ENCODE measurements at regions of chr2 and their contacts with region 1.

Region 1: DNA sequence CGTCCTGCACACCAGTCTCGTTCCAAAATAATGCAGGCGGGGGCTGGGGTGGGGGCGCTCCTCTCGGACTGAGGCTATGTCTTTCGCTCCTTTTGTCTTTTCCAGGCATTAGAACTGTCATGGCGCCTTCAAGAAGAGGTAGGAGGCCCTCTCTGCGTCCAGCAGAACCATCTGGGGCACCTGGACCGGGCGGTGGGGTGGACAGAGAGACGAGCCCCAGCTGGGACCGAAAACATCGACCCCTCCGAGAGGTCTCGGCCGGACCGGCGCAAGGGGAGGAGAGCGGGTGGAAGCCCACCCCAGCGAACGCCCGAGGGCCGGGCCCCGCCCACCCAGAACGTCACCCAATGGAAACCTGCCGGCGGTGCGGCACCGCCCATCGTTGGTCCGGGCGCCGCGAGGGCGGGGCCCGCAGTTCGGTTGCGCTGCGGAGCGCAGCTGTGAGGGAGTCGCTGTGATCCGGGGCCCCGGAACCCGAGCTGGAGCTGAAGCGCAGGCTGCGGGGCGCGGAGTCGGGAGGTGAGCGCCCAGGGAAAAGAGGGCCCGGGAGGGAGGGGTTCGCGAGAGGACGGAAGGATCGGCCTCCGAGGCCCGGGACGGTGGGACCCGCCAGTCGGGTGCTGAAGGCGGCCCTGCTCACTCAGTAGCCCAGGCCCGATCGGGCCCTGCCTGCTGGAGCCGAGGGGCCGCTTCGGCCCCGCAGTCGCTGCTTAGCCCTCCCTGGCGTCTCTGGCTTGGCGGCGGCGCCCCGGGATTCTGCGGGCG is at the start of gene NRBP1:
- DNase-seq: peak; percentile 93
- H3K4me3 Mint-ChIP-seq: peak within 1 kb of the TSS; percentile 98
- H3K27ac Mint-ChIP-seq: peak within 1 kb of the TSS; percentile 92
- H3K4me1 Mint-ChIP-seq: peaks cover 26% of the 10 kb centered on the region
- H3K27me3 Mint-ChIP-seq: no peaks in the 10 kb centered on the region
- total RNA-seq, gene NRBP1: 103 to 104 TPM

Region 2: DNA sequence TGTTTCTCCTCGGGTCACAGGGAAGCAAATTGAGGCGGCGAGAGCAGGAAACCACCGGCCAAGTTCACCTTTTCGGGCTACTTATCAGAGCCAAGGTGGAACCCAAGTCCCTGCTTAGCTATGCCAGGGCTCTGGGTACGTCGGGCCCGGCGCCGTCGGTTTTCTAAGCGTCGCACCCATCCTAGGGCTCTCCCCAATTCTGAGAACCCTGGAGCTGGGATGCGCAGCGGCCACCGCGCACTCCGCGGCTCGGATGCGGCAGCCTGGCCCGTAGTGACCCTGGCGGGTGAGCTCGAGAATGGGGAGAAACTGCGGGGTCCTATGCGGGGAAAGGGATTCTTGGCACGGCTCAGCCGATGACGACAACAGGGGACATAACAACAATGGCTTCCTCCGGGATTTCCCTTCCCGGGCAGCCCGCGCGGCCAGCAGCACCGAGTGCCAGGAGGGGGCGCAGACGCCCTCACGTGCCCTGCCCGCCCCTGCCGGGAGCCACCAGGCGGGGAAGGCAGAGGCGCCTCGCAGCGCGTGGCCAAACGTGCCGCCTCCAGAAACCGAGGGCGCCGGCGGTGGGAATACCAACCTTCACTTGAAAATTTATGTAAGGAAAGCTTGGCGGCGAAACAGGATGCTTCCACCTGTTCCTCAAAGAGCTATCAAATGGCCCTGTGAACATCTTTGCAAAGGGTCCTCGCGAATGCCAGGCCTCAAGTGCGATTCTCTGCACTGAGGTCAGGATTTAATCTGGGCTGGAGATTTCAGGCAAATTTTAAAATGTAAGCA is 163.5 kb before region 1 on chr2:
- CTCF ChIA-PET with region 1: no interaction called
- POLR2A ChIA-PET with region 1: no interaction called
- DNase-seq: peak; percentile 47
- H3K4me3 Mint-ChIP-seq: peak overlapping the region; percentile 50
- H3K27ac Mint-ChIP-seq: no peak overlapping the region
- H3K4me1 Mint-ChIP-seq: peaks cover 34% of the 10 kb centered on the region
- H3K27me3 Mint-ChIP-seq: peaks cover 46% of the 10 kb centered on the region

Region 3: DNA sequence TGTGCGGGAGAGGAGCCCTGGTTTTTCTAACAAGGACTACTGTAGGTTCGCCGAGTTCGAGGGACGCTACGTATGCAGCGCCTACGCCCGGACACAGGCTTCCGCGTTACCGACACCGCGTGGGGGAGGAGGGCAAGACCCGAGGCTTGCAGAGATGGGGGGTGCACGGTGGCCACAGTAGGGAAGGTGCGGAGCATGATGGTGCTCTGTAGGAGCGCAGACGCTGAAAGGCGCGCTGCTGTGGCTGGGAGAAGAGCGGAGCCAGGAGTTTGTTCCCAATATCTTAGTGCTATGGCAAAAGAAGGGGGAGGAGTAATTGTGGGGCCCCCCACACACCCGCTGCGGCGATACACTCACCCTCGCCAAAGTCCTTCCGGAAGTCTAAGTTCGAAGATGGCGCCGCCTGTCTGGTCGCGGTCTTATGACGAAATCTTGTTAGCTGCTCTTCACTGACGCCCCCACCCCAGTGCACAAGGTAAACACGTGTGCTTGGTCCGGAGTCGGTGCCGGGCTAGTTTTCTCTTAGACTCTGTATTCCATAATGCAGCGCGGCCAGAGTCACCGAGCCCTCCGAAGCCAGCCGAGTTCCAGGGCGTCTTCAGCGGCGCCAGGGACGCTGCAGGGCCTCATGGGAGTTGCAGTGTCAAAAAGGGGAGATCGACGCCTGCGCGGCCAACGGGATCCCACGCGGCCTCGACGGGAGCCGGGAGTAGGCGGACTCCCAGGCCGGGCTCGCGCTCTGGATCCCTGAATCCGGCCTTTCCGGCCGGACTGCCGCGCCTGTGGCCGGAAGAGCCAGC is 71.8 kb before region 1 on chr2 and contains the start of gene GTF3C2:
- CTCF ChIA-PET with region 1: interaction called, 3 read pairs
- POLR2A ChIA-PET with region 1: interaction called, 13 read pairs
- DNase-seq: peak; percentile 93
- H3K4me3 Mint-ChIP-seq: peak within 1 kb of the TSS; percentile 95
- H3K27ac Mint-ChIP-seq: peak within 1 kb of the TSS; percentile 97
- H3K4me1 Mint-ChIP-seq: peaks cover 50% of the 10 kb centered on the region
- H3K27me3 Mint-ChIP-seq: no peaks in the 10 kb centered on the region
- total RNA-seq, gene GTF3C2: 49.0 to 49.1 TPM

Region 4: DNA sequence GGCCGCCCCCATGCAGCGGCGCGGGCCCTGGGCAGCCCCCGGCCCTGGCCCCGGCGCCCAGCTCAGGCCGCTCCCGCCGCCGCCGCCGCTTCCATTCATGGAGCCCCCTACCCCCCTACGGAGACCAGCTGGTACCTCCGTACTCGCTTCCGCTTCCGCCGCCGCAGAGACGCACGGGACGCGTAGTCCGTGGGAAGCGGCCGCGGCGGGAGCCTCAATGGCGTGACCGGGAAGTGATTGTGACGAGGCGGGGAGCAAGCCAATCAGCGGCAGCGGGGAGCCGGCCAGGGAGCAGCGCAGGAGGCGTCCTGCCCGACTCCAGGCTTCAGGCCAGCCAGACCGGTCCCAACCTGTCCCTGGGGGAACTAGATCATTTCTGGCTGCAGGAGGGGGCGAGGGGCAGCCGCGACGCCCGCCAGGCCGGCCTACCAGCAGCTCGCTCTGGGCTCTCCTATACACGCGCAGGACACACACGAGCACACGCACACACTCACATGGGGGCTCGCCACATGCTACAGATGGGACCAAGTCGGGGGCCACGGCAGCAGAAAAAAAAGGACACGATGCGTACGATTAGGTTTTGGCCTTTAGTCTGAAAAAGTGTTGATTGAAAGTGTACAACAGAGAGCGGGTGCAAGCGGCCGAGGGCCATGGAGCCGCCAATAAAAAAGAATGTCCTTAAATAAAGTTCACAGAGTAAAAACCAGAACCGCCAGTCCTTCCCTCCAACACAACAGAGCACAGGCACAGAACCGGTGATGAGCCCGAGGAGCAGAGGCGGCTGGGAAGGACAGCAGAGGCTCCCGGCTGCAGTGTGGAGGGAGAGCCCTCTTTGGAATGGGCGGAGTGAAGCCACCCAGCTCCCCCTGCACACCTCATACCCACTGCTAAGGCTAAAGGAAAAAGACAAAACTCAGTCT is 47.5 kb before region 1 on chr2 and contains the start of gene ZNF513:
- CTCF ChIA-PET with region 1: interaction called, 3 read pairs
- POLR2A ChIA-PET with region 1: interaction called, 45 read pairs
- DNase-seq: peak; percentile 93
- H3K4me3 Mint-ChIP-seq: peak within 1 kb of the TSS; percentile 87
- H3K27ac Mint-ChIP-seq: peak within 1 kb of the TSS; percentile 92
- H3K4me1 Mint-ChIP-seq: peaks cover 37% of the 10 kb centered on the region
- H3K27me3 Mint-ChIP-seq: no peaks in the 10 kb centered on the region
- total RNA-seq, gene ZNF513: 15.6 to 16.7 TPM

Region 5: DNA sequence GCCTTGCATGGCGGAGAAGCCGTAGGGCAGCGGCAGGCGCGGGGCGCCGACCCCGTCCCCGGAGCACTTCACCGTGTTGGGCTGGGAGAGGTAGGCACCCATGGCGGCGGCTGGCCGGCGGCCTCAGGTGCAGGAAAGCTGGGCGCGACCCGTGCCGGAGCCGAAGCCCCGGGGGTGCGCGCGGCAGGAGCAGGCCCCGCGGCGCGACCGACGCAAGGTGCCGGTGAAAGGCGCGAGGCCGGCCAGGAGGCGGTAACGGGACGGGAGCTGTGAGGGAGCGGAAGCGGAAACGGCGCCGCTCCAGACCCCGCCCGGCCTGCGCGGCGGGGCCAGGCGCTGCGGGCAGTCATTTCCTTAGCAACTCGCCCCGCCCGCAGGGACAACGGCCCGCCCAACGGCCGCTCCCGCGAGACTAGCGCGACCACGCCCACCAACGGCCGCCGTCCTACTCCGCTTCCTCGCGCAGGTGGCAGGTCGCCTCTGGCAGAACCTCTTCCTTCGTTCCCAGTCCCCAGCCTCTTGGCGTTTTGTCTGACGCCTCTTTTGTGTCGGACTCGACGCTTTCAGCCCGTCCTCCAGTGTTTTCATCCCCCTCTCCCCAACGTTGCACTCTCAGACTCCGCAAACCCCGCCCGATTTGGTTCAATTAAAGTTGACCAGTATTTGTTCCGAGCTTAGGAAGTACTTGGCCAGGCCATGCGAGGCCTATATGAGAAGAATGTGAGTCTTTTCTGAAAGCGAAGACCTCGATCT is 18.9 kb before region 1 on chr2 and contains the start of gene PPM1G:
- CTCF ChIA-PET with region 1: interaction called, 33 read pairs
- POLR2A ChIA-PET with region 1: interaction called, 155 read pairs
- DNase-seq: peak; percentile 97
- H3K4me3 Mint-ChIP-seq: peak within 1 kb of the TSS; percentile 82
- H3K27ac Mint-ChIP-seq: peak within 1 kb of the TSS; percentile 74
- H3K4me1 Mint-ChIP-seq: peaks cover 45% of the 10 kb centered on the region
- H3K27me3 Mint-ChIP-seq: peaks cover 4% of the 10 kb centered on the region
- total RNA-seq, gene PPM1G: 119 to 122 TPM

Region 6: GRCh38 chr2:27461118-27461517 is 32.7 kb after region 1 on chr2:
- CTCF ChIA-PET with region 1: no interaction called
- POLR2A ChIA-PET with region 1: no interaction called
- DNase-seq: no peak
- H3K4me3 Mint-ChIP-seq: no peak overlapping the region
- H3K27ac Mint-ChIP-seq: no peak overlapping the region
- H3K4me1 Mint-ChIP-seq: no peaks in the 10 kb centered on the region
- H3K27me3 Mint-ChIP-seq: no peaks in the 10 kb centered on the region

Region 7: GRCh38 chr2:27628767-27629709 is 200.6 kb after region 1 on chr2 and contains the starts of genes CCDC121 and GPN1:
- CTCF ChIA-PET with region 1: interaction called, 5 read pairs
- POLR2A ChIA-PET with region 1: interaction called, 15 read pairs
- DNase-seq: peak; percentile 98
- H3K4me3 Mint-ChIP-seq: no peak within 1 kb of the TSS
- H3K27ac Mint-ChIP-seq: no peak within 1 kb of the TSS
- H3K4me1 Mint-ChIP-seq: peaks cover 16% of the 10 kb centered on the region
- H3K27me3 Mint-ChIP-seq: no peaks in the 10 kb centered on the region
- total RNA-seq, gene CCDC121: 0.78 to 0.90 TPM
- total RNA-seq, gene GPN1: 45.0 to 45.8 TPM

Region 8: DNA sequence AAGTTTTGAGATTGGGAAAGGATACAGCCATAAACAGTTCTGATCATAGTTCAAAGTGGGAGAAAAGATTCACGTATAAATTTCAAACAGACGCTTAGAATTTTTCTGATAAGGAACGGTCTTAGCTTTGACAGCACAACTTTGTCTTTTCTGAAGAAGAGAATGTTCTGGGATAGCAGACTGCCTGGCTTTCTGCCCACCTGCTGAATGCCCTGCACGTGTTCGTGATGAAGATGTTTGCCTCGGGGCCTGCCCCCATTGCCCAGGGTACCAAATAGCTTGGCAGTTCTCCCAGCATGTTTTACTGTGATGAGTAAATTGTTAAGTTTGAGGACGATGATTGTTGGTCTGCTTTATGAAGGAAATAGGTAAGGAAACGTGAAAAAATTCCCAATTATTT is 347.7 kb after region 1 on chr2:
- CTCF ChIA-PET with region 1: no interaction called
- POLR2A ChIA-PET with region 1: no interaction called
- DNase-seq: no peak
- H3K4me3 Mint-ChIP-seq: no peak overlapping the region
- H3K27ac Mint-ChIP-seq: no peak overlapping the region
- H3K4me1 Mint-ChIP-seq: peaks cover 47% of the 10 kb centered on the region
- H3K27me3 Mint-ChIP-seq: no peaks in the 10 kb centered on the region

Region 9: DNA sequence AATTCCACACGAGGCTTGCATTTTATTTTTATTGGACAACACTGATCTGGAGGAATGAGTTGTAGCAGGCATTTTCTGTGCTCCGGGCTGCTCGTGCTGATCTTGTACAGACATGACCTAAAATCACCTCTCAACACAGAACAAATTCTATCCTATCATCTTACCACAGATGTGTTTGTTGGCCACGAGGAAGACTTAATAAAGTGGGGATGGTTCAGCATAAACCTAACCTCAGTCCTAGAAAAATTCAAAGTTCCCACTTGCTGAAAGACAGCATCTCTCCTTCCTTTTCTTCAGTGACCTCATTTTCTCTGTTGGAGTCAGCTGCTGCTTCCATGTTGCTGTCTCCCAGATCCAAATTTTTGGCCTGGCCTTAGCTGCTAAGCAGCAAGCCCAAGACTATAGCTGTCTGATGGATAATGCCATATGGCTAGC is 416.4 kb after region 1 on chr2:
- CTCF ChIA-PET with region 1: no interaction called
- POLR2A ChIA-PET with region 1: no interaction called
- DNase-seq: no peak
- H3K4me3 Mint-ChIP-seq: no peak overlapping the region
- H3K27ac Mint-ChIP-seq: no peak overlapping the region
- H3K4me1 Mint-ChIP-seq: no peaks in the 10 kb centered on the region
- H3K27me3 Mint-ChIP-seq: no peaks in the 10 kb centered on the region